Activated CD8-positive, alpha-beta T cell treated with anti-CD3 and anti-CD28 coated beads for 36 hours (primary cell): ENCODE measurements at regions of chr17 and their contacts with region 1.

Region 1: DNA sequence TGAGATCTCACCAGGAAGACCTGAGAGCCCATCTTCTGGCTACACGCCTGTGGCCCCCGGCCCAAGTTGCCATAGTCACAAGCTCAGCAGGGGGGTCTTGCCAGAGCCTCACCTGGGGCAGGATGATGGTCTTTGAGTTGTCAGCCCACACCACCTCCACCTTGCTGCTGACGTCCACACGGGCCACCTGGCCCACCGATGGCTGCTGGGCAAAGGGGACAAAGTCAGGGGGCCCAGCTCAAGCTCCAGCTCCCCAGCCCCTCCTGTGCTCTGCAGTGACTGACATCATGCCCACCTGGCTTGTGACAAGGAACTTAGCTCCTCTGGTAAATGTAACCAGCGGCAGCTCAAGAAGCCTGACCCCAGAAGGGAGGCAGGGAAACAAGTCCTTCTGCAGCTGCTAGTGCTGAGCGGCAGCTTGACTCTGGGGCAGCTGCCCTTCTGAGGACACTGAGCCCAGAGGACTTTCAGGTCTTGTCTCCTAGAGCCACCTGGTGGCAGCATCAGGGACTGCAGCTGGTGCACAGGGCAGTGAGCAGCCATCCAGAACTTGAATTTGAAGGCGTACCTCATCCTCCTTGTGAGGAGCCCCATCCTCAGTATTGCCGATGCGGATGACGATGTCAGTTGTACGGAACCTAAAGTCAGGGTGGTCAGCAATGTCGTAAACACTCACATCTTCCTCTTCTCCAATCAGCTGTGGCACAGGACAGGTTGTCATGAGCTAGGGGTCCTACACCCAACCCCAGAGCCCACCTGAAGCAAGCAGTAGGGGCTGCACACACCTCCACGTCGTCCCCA is 13.5 kb downstream of the SPHK1 start:
- DNase-seq: peak; percentile 93
- ATAC-seq: peak; percentile 97
- H3K4me3 Mint-ChIP-seq: no peak overlapping the region
- H3K27ac Mint-ChIP-seq: no peak overlapping the region
- H3K4me1 Mint-ChIP-seq: no peaks in the 10 kb centered on the region
- H3K27me3 Mint-ChIP-seq: no peaks in the 10 kb centered on the region
- CTCF ChIP-seq: peak; percentile 96

Region 2: DNA sequence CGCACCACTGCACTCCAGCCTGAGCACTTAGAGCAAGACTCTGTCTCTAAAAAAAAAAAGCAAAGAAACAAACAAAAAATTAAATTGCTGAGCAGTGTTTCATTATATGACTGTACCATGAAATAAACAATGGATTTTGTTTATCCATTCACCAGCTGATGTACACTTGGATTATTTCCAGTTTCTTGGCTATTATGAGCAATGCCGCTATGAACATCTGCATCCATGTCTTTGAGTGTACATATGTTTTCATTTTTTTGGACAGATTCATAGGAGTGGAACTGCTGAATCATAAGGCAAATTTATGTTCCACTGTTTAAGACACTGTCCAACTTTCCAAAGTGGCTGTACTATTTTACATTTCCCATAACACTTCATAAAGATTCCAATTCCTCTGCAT is 165.5 kb before region 1 on chr17:
- CTCF ChIA-PET with region 1: no interaction called
- POLR2A ChIA-PET with region 1: no interaction called
- intact Hi-C with region 1: no loop called
- DNase-seq: no peak
- ATAC-seq: no peak
- H3K4me3 Mint-ChIP-seq: no peak overlapping the region
- H3K27ac Mint-ChIP-seq: no peak overlapping the region
- H3K4me1 Mint-ChIP-seq: peaks cover 51% of the 10 kb centered on the region
- H3K27me3 Mint-ChIP-seq: no peaks in the 10 kb centered on the region
- CTCF ChIP-seq: no peak

Region 3: GRCh38 chr17:76307299-76307965 is 90.5 kb before region 1 on chr17:
- CTCF ChIA-PET with region 1: interaction called, 154 read pairs
- POLR2A ChIA-PET with region 1: interaction called, 4 read pairs
- intact Hi-C with region 1: loop called (anchors 5 kb)
- DNase-seq: no peak
- ATAC-seq: no peak
- H3K4me3 Mint-ChIP-seq: no peak overlapping the region
- H3K27ac Mint-ChIP-seq: no peak overlapping the region
- H3K4me1 Mint-ChIP-seq: peaks cover 1% of the 10 kb centered on the region
- H3K27me3 Mint-ChIP-seq: no peaks in the 10 kb centered on the region
- CTCF ChIP-seq: no peak

Region 4: GRCh38 chr17:76331083-76331482 is 66.8 kb before region 1 on chr17:
- CTCF ChIA-PET with region 1: interaction called, 12 read pairs
- POLR2A ChIA-PET with region 1: no interaction called
- intact Hi-C with region 1: no loop called
- DNase-seq: no peak
- ATAC-seq: no peak
- H3K4me3 Mint-ChIP-seq: no peak overlapping the region
- H3K27ac Mint-ChIP-seq: no peak overlapping the region
- H3K4me1 Mint-ChIP-seq: no peaks in the 10 kb centered on the region
- H3K27me3 Mint-ChIP-seq: no peaks in the 10 kb centered on the region
- CTCF ChIP-seq: no peak

Region 5: DNA sequence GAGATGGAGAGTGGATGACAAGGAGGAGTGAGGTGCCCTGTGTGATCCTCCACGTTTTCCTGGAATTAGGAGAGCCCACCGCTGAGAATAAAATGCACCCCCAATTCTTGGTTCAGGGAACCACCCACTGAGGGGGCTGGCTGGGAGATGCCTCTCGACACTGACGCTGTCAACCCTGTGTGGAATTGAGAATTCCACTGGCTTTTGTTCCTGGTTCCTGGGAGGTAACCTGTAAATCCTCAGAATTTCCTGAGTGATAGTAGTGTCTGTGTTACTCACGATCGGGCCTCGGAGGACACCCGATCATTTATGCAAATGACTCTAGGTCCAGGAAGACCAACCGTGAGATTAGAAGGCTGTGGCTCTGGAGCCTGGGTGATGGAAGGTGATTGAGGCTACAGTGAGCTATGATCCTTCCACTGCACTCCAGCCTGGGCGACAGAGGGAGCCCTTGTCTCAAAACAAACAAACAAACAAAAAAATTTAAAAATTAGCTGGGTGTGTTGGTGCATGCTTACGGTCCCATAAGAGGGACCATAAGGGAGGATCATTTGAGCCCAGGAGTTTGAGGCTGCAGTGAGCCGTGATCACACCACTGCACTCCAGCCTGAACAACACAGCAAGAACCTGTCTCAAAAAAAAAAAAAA is 32.5 kb before region 1 on chr17:
- CTCF ChIA-PET with region 1: interaction called, 18 read pairs
- POLR2A ChIA-PET with region 1: no interaction called
- intact Hi-C with region 1: no loop called
- DNase-seq: no peak
- ATAC-seq: no peak
- H3K4me3 Mint-ChIP-seq: no peak overlapping the region
- H3K27ac Mint-ChIP-seq: no peak overlapping the region
- H3K4me1 Mint-ChIP-seq: peaks cover 3% of the 10 kb centered on the region
- H3K27me3 Mint-ChIP-seq: no peaks in the 10 kb centered on the region
- CTCF ChIP-seq: no peak

Region 6: DNA sequence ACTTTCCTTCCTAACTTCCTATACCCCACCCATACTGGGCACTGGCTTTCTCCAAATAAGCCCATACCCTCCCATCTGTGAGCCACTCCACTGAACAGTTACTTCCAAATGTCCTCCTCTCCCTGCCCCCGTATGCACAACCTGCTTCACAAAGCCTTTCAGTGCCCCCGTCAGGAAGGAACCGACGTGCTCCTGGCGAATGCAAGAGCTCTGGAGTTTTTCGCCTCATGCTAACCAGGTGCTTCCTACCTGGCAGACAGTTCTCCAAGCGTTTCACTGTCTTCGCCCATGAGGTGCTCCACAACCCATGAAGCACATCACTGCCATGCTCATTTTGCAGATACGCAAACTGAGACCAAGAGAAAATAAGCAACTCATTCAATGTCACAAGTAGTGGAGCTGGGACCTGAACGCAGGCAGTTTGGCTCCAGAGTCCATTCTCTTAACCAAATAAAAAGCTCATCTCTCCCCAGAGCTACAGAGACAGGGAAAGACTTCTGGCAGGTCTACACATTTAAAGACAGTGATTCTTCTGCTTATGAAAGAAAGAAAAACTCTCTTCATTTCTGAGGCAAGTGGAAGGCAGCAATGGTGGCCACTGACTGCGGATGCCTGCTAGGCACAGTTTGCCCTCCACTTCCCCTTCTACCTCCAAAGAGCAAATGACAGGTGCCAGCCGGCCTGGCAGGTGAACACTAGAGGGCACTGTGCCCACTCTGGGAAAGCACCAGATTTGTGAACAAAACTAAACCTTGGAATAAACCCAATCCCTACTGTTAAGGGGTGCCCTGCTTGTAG is 10.4 kb after region 1 on chr17:
- CTCF ChIA-PET with region 1: interaction called, 35 read pairs
- POLR2A ChIA-PET with region 1: no interaction called
- intact Hi-C with region 1: no loop called
- DNase-seq: peak; percentile 81
- ATAC-seq: peak; percentile 81
- H3K4me3 Mint-ChIP-seq: no peak overlapping the region
- H3K27ac Mint-ChIP-seq: no peak overlapping the region
- H3K4me1 Mint-ChIP-seq: peaks cover 8% of the 10 kb centered on the region
- H3K27me3 Mint-ChIP-seq: no peaks in the 10 kb centered on the region
- CTCF ChIP-seq: peak; percentile 88

Region 7: DNA sequence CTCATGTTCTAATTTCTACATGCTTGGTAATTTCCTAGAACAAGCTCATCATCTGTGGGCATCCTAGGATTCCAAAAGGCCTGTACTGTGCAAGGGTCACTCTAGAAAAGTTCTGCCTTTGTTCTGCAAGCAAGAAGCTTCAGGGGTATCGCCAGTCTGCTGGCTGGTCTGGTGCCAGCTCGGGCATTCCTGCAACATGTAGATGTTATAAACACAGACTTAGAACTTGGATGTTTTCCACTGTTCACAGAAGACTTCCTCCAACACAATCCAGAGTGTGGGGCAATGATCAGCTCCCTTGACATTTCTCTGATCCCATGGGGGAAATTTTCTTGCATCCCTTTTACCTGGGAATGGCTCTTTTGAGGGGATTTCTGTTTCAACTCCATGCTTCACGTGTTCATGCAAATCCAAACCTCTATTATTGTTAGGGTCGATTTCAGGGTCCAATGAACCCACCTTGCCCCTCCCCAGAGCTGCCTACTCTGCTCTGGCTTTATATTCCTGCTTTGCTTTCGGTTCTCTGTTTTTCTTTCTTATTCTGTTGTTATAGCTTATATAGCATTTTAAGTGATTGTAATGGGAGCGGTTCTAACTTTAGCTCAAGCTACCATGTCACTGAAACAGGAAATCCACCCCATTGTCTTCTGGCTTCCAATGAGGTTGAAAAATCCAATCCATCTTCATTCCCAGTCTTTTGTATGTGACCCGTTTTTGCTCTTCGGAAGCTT is 29.8 kb after region 1 on chr17:
- CTCF ChIA-PET with region 1: interaction called, 20 read pairs
- POLR2A ChIA-PET with region 1: no interaction called
- intact Hi-C with region 1: no loop called
- DNase-seq: no peak
- ATAC-seq: no peak
- H3K4me3 Mint-ChIP-seq: no peak overlapping the region
- H3K27ac Mint-ChIP-seq: no peak overlapping the region
- H3K4me1 Mint-ChIP-seq: peaks cover 11% of the 10 kb centered on the region
- H3K27me3 Mint-ChIP-seq: no peaks in the 10 kb centered on the region
- CTCF ChIP-seq: no peak